SK-N-SH (cell line): ENCODE measurements at regions of chr11 and their contacts with region 1.

Region 1: DNA sequence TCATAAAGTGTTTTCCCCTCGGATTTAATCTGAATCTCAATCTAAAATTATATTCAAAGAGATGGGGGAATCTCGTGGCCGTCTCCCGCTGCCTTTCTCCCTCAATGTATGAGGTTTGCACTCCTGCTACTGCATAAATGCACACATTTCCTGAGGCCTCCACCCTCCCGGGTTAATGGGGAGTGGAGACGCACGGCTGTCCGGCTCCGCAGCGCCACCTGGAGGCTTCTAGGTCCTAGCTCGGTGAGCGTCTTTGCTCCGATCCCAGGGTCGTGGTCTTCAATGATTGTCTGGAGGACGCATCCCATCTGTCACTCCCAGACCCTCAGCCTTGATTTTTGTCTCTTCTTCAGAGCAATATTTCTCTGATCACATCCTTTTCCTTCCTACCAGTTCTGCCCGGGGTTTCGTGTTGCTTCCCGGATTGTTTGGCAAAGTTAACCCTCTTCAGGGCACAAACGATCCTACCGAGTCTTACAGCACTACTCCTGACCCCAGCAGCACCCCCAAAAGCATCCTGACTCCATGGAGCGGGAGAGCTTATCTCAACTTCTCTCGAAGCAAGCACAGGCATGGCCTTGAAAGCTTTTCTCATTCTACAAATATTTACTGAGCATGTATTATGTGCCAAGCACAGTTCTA is at the start of gene LMO1:
- DNase-seq: peak; percentile 94
- H3K4me3 ChIP-seq: peak within 1 kb of the TSS; percentile 54 to 59
- H3K27ac ChIP-seq: peak within 1 kb of the TSS in 1 of 2 experiments; percentile 97; a peak in 2 of 4 replicates
- H3K4me1 ChIP-seq: peaks cover 5 to 69% of the 10 kb centered on the region in 2 experiments; a peak in 2 of 4 replicates
- H3K27me3 ChIP-seq: peaks cover 47% of the 10 kb centered on the region
- CTCF ChIP-seq: peak; percentile 88
- EP300 ChIP-seq: peak in 1 of 2 experiments; percentile 53; a peak in 2 of 4 replicates
- RAD21 ChIP-seq: peak; percentile 93
- polyA plus RNA-seq, gene LMO1: 0.12 and 0.62 TPM in 2 replicates

Region 2: GRCh38 chr11:7949934-7950333 is 314.0 kb before region 1 on chr11:
- CTCF ChIA-PET with region 1: no interaction called
- POLR2A ChIA-PET with region 1: no interaction called
- DNase-seq: no peak
- H3K4me3 ChIP-seq: no peak overlapping the region
- H3K27ac ChIP-seq: no peak overlapping the region
- H3K4me1 ChIP-seq: no peaks in the 10 kb centered on the region
- H3K27me3 ChIP-seq: no peaks in the 10 kb centered on the region; the same call in 1 of the 2 replicates
- CTCF ChIP-seq: no peak
- EP300 ChIP-seq: no peak
- RAD21 ChIP-seq: no peak

Region 3: GRCh38 chr11:8201644-8202365 is 62.1 kb before region 1 on chr11:
- CTCF ChIA-PET with region 1: interaction called, 58 read pairs
- POLR2A ChIA-PET with region 1: interaction called, 16 read pairs
- DNase-seq: no peak
- H3K4me3 ChIP-seq: no peak overlapping the region
- H3K27ac ChIP-seq: no peak overlapping the region
- H3K4me1 ChIP-seq: peaks cover 0 to 10% of the 10 kb centered on the region in 2 experiments; a peak in 1 of 4 replicates
- H3K27me3 ChIP-seq: no peaks in the 10 kb centered on the region
- CTCF ChIP-seq: no peak
- EP300 ChIP-seq: no peak
- RAD21 ChIP-seq: no peak

Region 4: DNA sequence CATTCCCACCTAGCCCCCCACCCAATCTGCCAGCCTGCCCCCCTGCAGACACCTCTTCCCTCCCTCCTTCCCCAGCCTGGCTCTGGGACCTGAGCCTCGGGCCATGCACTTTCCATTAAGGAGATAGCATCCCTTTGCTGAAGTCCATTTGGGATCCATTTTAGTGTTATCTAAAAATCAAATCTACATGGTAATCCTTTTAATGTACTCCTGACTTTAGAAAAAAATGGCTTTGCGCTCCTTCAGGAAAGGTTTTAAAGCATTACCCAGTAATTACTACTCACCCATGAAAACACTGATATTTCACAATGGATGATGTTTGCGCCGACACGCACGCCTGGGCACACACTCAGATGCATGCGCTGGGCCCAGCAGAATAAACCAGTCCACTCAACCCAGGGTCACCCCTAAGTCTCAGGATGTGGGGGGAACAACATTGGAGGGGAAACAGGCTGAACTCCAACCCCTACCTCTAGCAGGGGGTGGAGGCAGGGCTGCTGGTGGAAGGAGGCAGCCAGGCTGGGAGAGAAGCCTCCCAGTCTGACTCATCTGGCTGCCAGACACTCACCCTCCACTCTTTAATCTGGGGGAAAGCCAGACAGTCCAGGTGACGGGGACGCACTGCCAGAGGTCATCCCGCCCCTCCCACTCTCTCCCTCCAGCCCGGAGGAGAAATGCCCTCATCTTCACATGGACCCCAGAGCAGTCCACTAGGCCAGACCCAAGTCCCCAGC is 30.0 kb before region 1 on chr11:
- CTCF ChIA-PET with region 1: interaction called, 604 read pairs
- POLR2A ChIA-PET with region 1: interaction called, 62 read pairs
- DNase-seq: peak; percentile 78
- H3K4me3 ChIP-seq: peak overlapping the region in 1 of 2 experiments; percentile 0; a peak in 1 of 4 replicates
- H3K27ac ChIP-seq: peak overlapping the region; percentile 21 to 96; a peak in 3 of 4 replicates
- H3K4me1 ChIP-seq: peaks cover 0 to 92% of the 10 kb centered on the region in 2 experiments; a peak in 2 of 4 replicates
- H3K27me3 ChIP-seq: no peaks in the 10 kb centered on the region
- CTCF ChIP-seq: no peak
- EP300 ChIP-seq: peak; percentile 8 to 98; a peak in 2 of 4 replicates
- RAD21 ChIP-seq: no peak

Region 5: DNA sequence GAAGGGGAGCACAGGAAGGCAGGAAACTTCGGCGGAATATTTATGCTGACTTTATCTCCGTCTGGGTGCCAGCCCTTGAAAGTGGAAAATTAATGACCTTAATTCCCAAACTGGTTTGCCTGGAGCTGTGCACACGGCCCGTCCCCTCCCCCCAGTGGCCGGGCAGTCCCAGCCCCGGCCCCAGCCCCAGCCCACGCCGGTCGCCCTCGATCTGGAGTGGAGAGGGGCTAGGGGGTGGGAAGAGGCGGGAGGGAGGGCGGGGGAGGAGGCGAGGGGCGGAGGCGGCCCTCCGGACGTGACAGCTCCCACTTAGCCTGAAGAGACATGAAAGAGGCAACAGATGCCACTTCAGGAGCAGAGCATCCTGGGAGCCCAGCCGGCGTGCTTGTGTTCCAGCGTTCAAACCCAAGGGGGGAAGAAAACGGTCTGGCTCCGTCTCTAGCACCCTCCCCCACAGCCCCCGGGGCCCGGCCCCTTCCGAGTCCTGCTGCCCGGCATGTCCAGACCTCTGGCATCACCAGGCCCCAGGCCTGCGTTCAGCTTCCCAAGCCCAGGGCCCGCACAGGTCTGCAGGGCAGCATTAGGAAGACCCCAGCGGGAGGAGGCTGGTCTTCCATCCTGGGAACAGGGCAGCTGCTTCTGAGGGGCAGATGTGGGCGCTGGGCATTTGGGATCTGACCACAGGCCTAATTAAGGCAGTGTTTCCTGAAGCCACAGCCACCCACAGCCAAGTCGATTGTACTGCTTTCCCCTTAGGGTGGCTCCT is 19.8 kb after region 1 on chr11:
- CTCF ChIA-PET with region 1: interaction called, 24 read pairs
- POLR2A ChIA-PET with region 1: interaction called, 10 read pairs
- DNase-seq: peak; percentile 93
- H3K4me3 ChIP-seq: peak overlapping the region in 1 of 2 experiments; percentile 5; a peak in 1 of 4 replicates
- H3K27ac ChIP-seq: peak overlapping the region in 1 of 2 experiments; percentile 98; a peak in 2 of 4 replicates
- H3K4me1 ChIP-seq: peaks cover 0 to 34% of the 10 kb centered on the region in 2 experiments; a peak in 2 of 4 replicates
- H3K27me3 ChIP-seq: no peaks in the 10 kb centered on the region; the same call in 1 of the 2 replicates
- CTCF ChIP-seq: no peak
- EP300 ChIP-seq: peak in 1 of 2 experiments; percentile 57; a peak in 1 of 4 replicates
- RAD21 ChIP-seq: no peak; the same call in 1 of the 2 replicates

Region 6: DNA sequence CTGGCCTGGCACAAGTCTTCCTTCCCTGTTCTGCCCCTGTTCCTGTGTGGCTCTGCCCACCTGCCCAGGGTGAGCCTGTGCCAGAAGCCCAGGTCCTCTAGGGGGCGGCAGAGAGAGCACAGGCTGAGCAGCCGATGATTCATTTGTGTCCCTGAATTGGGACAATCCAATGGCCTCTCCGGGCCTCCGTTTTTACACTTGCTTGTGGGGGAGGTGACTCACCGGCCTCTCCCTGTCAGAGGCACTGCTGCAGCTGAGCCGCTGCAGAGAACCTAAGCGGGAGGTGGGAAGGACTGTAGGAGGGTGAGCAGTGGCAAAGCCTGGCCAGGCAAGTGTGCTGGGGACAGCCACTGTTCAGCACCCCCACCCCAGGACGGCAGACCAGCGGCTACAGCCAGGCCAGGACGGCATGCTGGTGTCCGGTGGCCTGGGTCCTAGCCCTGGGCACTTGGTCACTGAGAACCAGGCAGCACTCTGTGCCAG is 65.0 kb after region 1 on chr11:
- CTCF ChIA-PET with region 1: interaction called, 16 read pairs
- POLR2A ChIA-PET with region 1: no interaction called
- DNase-seq: peak; percentile 89
- H3K4me3 ChIP-seq: peak overlapping the region in 1 of 2 experiments; percentile 45; a peak in 3 of 4 replicates
- H3K27ac ChIP-seq: peak overlapping the region in 1 of 2 experiments; percentile 28; a peak in 1 of 4 replicates
- H3K4me1 ChIP-seq: peaks cover 6 to 23% of the 10 kb centered on the region in 2 experiments; a peak in 2 of 4 replicates
- H3K27me3 ChIP-seq: no peaks in the 10 kb centered on the region
- CTCF ChIP-seq: peak; percentile 88
- EP300 ChIP-seq: no peak
- RAD21 ChIP-seq: peak; percentile 60

Region 7: DNA sequence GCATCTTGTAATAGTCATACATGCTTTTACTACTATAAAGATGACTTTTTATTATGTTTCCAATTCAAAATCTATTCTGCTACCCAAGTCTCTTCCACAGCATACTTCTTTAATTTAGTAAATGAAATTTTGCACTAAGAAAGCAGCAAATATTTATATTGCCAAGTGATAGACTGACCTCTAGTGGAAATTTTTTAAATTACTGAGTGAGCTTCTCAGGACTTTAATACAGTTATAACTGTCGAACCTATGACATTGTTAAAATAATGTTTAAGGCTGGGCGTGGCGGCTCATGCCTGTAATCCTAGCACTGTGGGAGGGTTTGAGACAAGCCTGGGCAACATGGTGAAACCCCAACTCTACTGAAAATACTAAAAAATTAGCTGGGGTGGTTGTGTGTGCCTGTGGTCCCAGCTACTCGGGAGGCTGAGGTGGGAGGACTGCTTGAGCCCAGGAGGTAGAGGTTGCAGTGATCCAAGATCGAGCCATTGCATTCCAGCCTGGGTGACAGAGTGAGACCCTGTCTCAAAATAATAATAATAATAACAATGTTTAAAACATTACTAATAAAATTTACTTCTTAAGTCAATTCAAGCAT is 302.8 kb after region 1 on chr11:
- CTCF ChIA-PET with region 1: interaction called, 56 read pairs
- POLR2A ChIA-PET with region 1: interaction called, 3 read pairs
- DNase-seq: peak; percentile 14
- H3K4me3 ChIP-seq: peak overlapping the region in 1 of 2 experiments; percentile 17; a peak in 1 of 4 replicates
- H3K27ac ChIP-seq: no peak overlapping the region; a peak in 1 of 4 replicates
- H3K4me1 ChIP-seq: peaks cover 0 to 10% of the 10 kb centered on the region in 2 experiments; a peak in 1 of 4 replicates
- H3K27me3 ChIP-seq: no peaks in the 10 kb centered on the region
- CTCF ChIP-seq: peak; percentile 84
- EP300 ChIP-seq: no peak
- RAD21 ChIP-seq: peak; percentile 89